ENCODE measurements at regions of chr9 and their contacts with region 1.

Region 1: DNA sequence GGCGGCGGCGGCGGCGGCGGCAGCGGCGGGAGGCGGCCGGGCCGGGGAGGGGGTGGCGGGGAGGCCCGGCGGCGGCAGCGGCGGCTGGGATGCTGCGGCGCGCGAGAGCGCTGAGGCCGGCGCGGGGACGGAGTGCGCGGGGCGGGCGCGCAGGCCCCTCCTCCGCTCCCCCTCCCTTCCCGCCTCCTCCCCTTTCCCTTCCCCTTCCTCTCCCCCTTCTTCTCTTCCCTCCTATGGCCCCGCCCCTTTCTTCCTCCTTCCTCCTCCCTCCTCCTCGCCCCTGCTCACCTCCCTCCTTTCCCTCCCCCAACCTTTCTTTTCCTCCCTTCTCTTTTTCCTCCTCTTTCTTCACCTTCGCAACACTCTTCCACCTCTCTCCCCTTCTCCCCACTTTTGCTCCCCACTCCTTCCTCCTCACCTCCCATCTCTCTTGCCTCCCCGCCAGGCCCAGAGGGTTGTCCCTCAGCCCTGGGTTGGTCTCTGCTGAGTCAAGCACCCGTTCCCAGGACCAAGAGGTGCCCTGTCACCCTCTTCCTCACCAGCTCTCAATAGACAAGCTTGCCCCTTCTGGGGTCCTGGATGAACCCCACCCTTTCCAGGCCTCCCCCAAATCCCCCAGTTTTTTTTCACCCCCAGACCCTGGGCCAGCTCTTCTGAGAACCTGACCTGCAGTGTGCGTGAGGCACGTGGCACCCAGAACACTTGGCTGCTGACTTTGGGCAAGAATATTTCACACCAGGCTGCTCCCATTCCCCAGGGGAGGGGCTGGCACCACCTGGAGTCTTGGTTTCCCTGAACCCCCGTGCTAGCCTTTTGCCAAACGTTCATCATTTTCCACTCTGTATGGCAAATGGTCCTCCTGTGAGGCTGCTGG is at the start of gene SEMA4D:
- DNase-seq: peak in 2 of 9 donors; percentile 48 to 71
- ATAC-seq: peak; percentile 22
- H3K4me3 ChIP-seq: peak within 1 kb of the TSS; percentile 67
- H3K4me3 Mint-ChIP-seq: peak within 1 kb of the TSS; percentile 85 to 100 (median 98)
- H3K27ac ChIP-seq: peak within 1 kb of the TSS; percentile 76
- H3K27ac Mint-ChIP-seq: peak within 1 kb of the TSS; percentile 86 to 99 (median 94)
- H3K4me1 ChIP-seq: peaks cover 72 to 75% of the 10 kb centered on the region in 2 donors
- H3K4me1 Mint-ChIP-seq: peaks cover 72 to 90% (median 77%) of the 10 kb centered on the region in 7 donors
- H3K27me3 ChIP-seq: no peaks in the 10 kb centered on the region
- H3K27me3 Mint-ChIP-seq: no peaks in the 10 kb centered on the region
- total RNA-seq, gene SEMA4D: 389 to 465 (median 460) TPM

Region 2: DNA sequence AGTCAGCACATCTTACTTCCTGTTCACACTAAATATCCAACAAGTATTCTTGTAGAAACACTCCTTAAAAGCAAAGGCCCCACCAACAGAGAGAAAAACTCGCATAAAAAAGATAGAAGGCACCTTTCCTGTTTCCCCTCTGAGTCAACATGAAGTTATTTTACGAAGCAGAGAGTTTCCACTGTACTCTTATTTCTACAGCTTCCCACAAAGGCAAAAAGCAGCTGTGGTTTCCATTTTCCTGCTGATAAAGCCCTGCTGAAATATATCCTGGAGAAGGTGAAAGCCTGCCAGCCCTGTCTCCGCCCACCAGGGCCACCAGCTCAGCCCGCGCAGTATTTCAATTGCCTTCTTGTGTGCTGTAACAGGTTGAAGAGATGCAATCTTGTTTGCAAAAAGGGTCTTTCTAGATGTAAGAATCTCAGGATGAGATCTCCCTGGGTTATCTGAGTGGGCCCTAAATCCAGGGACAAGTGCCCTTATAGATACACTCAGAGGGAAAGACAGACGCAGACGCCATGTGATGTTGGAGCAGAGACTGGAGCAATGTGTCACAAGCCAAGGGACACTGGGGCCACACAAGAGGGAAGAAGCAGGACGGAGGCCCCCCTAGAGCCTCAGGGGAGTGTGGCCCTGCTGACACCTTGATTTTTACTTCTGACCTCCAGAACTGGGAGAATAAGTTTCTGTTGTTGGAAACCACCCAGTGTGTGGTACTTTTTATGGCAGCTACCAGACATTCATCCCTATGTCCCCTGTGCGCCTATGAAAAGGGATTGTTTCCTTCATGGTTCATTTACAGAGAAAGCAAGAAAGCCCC is 20.2 kb before region 1 on chr9:
- CTCF ChIA-PET with region 1: interaction called, 6 read pairs
- POLR2A ChIA-PET with region 1: interaction called, 9 read pairs
- intact Hi-C with region 1: loop called (anchors 1 to 2 kb)
- DNase-seq: peak in 8 of 9 donors; percentile 49 to 78 (median 66)
- ATAC-seq: peak; percentile 63
- H3K4me3 ChIP-seq: peak overlapping the region; percentile 49
- H3K4me3 Mint-ChIP-seq: peak overlapping the region; percentile 80 to 92 (median 87)
- H3K27ac ChIP-seq: peak overlapping the region; percentile 78
- H3K27ac Mint-ChIP-seq: peak overlapping the region; percentile 90 to 99 (median 95)
- H3K4me1 ChIP-seq: peaks cover 74 to 82% of the 10 kb centered on the region in 2 donors
- H3K4me1 Mint-ChIP-seq: peaks cover 76 to 96% (median 90%) of the 10 kb centered on the region in 7 donors
- H3K27me3 ChIP-seq: no peaks in the 10 kb centered on the region
- H3K27me3 Mint-ChIP-seq: no peaks in the 10 kb centered on the region

Region 3: DNA sequence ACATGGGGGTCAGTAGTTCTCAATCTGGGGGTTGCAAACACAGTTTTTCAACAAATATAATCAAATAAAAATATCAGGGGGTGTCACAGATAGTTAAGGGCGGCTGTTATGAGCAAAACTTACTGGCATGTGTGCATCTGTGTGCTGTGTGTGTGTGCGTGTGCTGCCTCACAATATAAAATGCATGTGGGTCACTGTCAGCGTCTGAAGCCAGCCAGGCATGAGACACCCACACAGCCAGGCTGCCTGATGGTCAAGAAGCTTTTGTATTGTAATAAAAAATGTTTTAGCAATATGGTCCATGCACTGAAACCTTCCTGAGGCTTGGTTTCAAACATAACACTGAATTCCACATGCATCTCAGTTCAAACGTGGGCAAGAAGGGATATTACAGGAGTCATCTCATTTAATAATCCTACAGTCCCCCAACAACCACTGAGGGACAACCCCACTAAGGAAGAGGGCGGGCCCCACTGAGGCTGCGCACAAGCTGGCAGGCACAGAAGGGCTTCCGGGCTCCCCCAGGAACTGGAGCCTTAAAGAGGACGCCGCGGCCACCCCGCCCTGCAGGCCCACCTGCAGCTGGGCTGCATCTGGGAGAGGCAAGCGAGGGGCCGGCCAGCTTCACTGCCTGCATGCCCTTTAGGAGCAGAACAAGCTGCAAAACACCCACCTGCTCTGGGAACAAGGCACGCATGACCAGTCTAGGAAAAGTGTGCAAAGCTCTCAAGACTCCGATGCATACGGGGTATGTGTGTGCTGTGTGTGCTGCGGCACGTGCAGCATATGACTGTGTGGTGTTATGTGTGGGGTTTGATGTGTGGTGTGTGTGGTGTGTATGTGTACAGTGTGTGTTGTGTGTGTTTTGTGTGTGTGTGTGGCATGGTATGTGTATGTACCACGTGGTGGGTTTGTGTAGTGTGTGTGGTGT is 14.4 kb before region 1 on chr9:
- CTCF ChIA-PET with region 1: interaction called, 6 read pairs
- POLR2A ChIA-PET with region 1: interaction called, 11 read pairs
- intact Hi-C with region 1: loop called (anchors 1 kb)
- DNase-seq: peak; percentile 41 to 76 (median 66)
- ATAC-seq: peak; percentile 84
- H3K4me3 ChIP-seq: peak overlapping the region; percentile 48
- H3K4me3 Mint-ChIP-seq: peak overlapping the region; percentile 85 to 100 (median 90)
- H3K27ac ChIP-seq: peak overlapping the region; percentile 68
- H3K27ac Mint-ChIP-seq: peak overlapping the region; percentile 88 to 99 (median 93)
- H3K4me1 ChIP-seq: peaks cover 67 to 71% of the 10 kb centered on the region in 2 donors
- H3K4me1 Mint-ChIP-seq: peaks cover 70 to 96% (median 90%) of the 10 kb centered on the region in 7 donors
- H3K27me3 ChIP-seq: no peaks in the 10 kb centered on the region
- H3K27me3 Mint-ChIP-seq: no peaks in the 10 kb centered on the region

Region 4: DNA sequence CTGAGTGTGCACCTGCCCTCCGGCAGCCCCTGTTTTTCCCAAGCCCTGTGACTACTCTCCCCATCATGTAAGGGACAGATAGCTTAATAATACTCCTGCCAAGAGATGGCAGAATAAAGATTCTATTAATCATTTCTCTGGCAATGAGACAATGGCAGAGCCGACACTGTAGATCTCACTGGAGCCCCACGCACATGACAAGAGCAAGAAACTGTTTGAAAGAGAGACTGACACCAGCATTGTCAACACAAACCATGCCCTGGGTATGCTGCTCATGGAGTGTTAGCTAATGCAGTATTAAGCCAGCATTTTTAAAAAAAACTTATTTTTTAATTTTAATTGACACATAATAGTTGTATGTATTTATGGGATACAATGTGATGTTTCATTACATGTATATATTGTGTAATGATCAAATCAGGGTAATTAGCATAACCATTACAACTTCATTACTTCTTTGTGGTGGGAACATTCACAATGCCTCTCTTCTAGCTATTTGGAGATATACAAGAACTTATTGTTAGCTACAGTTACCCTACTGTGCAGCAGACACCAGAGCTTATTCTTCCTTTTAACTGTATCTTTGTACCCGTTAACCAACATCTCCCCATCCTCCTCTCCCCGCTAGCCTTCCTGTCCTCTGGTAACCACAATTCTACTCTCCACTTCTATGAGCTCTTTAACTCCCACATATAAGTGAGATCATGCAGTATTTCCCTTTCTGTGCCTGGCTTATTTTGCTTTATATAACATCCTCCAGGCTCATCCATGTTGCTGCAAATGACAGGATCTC is 31.2 kb after region 1 on chr9:
- CTCF ChIA-PET with region 1: interaction called, 4 read pairs
- POLR2A ChIA-PET with region 1: interaction called, 31 read pairs
- intact Hi-C with region 1: no loop called
- DNase-seq: peak in 6 of 9 donors; percentile 38 to 67 (median 56)
- ATAC-seq: peak; percentile 75
- H3K4me3 ChIP-seq: peak overlapping the region; percentile 25
- H3K4me3 Mint-ChIP-seq: peak overlapping the region; percentile 53 to 90 (median 72)
- H3K27ac ChIP-seq: peak overlapping the region; percentile 50
- H3K27ac Mint-ChIP-seq: peak overlapping the region; percentile 82 to 100 (median 96)
- H3K4me1 ChIP-seq: peaks cover 88 to 98% of the 10 kb centered on the region in 2 donors
- H3K4me1 Mint-ChIP-seq: peaks cover 90 to 100% (median 100%) of the 10 kb centered on the region in 7 donors
- H3K27me3 ChIP-seq: no peaks in the 10 kb centered on the region
- H3K27me3 Mint-ChIP-seq: no peaks in the 10 kb centered on the region

Measured in naive thymus-derived CD4-positive, alpha-beta T cell (primary cell).